SK-N-SH (cell line): ENCODE measurements at regions of chr10 and their contacts with region 1.

Region 1: DNA sequence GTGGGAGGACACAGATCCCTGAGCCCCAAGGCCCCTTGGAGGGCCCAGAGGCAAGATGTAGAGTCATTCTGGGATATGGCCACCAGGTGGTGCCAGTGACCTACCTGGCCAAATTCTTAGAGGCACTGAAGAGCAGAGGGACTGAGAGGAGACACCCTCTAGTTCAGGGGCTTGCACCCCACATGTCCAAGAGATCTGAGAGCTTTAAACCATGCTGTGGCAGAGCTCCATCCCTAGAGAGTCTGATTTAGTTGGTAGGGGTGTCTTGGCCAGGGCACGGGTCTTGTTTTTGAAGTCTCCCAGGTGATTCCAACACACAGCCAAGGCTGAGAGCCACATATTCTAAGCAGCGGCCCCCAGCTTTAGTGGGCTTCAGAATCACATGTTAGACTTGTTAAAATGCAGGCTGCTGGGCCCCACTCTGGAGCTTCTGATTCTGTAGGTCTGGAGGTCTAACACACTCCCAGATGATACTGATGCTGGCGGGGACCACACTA is 52.5 kb downstream of the PRF1 start:
- DNase-seq: peak; percentile 88
- H3K4me3 ChIP-seq: no peak overlapping the region; a peak in 1 of 4 replicates
- H3K27ac ChIP-seq: no peak overlapping the region
- H3K4me1 ChIP-seq: peaks cover 3 to 5% of the 10 kb centered on the region in 2 experiments; a peak in 2 of 4 replicates
- H3K27me3 ChIP-seq: no peaks in the 10 kb centered on the region
- CTCF ChIP-seq: peak; percentile 88
- EP300 ChIP-seq: no peak
- RAD21 ChIP-seq: peak; percentile 98

Region 2: DNA sequence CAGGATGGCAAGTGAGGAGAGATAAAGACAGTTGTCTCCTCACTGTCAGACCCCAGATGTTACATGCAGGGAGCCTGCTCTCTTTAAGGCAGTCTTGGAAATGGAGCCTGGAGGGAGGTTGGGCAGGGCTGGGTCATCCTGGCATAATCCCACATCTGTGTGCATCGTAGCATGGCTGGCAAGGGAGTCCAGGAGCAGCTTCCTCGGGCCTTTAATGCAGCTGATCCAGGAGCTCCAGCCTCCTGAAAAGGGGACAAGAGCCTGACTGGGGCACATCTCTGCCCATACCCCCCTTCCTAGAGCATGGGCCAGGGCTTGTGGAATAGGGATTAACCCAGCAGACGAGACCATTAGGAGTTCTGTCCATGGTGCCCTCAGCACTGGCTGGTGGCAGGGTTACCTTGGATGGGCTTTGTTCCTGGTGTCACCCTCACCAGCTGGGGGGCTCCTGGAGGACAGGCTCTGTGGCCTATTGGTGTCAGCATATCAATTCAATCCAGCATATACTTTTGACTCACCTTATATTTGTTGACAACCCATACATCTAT is 200.2 kb after region 1 on chr10:
- CTCF ChIA-PET with region 1: interaction called, 14 read pairs
- POLR2A ChIA-PET with region 1: no interaction called
- DNase-seq: no peak
- H3K4me3 ChIP-seq: no peak overlapping the region
- H3K27ac ChIP-seq: no peak overlapping the region
- H3K4me1 ChIP-seq: no peaks in the 10 kb centered on the region; a peak in 1 of 4 replicates
- H3K27me3 ChIP-seq: no peaks in the 10 kb centered on the region
- CTCF ChIP-seq: no peak
- EP300 ChIP-seq: no peak
- RAD21 ChIP-seq: no peak

Region 3: DNA sequence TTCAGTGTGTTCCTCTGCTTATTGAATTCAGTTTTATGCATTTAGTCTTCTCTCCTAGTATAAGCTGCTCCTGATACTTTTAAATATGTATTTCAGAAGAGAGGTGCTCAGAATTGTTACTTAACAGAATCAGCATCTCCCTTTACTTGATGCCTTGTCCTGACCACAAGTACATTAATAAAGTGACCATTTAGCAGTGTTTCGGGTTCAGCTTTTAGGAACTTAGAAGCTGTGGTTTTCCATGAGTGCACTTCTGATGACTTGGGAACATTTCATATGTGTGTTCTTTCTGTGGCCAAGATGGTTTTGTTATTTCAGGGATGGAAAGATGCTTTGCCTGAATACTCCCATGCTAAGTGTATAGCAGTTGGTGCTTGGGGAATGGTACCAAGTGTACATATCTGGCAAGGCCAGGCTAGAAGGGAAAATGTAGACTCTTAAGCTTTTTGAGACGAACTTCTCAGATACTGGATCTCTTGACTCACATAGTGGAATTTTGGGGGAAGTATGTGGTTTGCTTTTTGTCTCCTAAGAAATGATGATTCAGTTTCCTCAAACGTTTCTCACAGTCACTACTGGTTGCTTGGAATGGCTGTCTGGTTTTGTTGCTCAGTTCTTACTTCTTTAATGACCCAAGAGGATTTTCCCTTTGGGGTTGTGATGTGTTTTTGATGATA is 283.0 kb after region 1 on chr10:
- CTCF ChIA-PET with region 1: no interaction called
- POLR2A ChIA-PET with region 1: no interaction called
- DNase-seq: no peak
- H3K4me3 ChIP-seq: 0 out of 4 replicates have a peak overlapping the region, but pooled peaks of 1 of the 2 experiments have one; percentile 9
- H3K27ac ChIP-seq: peak overlapping the region; percentile 65 to 99
- H3K4me1 ChIP-seq: peaks cover 24 to 54% of the 10 kb centered on the region in 2 experiments
- H3K27me3 ChIP-seq: no peaks in the 10 kb centered on the region
- CTCF ChIP-seq: no peak
- EP300 ChIP-seq: peak in 1 of 2 experiments; percentile 69; a peak in 1 of 4 replicates
- RAD21 ChIP-seq: no peak

Region 4: DNA sequence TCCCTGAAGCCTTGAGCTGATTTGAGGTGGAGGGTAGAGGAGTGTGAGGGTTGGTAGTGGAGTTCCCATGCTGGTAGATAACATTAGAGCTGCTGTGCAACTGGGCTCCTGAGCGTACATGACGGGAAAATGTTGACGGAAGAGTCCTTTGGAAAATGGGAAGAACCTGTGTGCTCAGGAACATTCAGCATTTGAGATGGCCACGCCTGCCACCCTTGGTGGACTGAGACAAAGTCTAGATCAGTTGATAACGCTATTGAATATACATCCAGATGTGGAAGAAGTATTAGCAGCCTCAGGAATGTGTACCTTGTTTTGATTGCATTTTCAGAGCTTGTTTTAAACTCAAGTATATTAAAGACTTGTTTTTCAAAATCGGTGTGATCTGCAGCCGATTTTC is 322.3 kb after region 1 on chr10:
- CTCF ChIA-PET with region 1: interaction called, 11 read pairs
- POLR2A ChIA-PET with region 1: no interaction called
- DNase-seq: no peak
- H3K4me3 ChIP-seq: no peak overlapping the region
- H3K27ac ChIP-seq: peak overlapping the region in 1 of 2 experiments; percentile 74; a peak in 2 of 4 replicates
- H3K4me1 ChIP-seq: peaks cover 0 to 26% of the 10 kb centered on the region in 2 experiments; a peak in 2 of 4 replicates
- H3K27me3 ChIP-seq: no peaks in the 10 kb centered on the region
- CTCF ChIP-seq: no peak
- EP300 ChIP-seq: no peak
- RAD21 ChIP-seq: no peak